Endothelial cell of umbilical vein (primary cell): ENCODE measurements at regions of chr3 and their contacts with region 1.

Region 1: GRCh38 chr3:30704931-30705890 is 98.8 kb downstream of the TGFBR2 start:
- DNase-seq: peak; percentile 82
- H3K4me3 ChIP-seq: no peak overlapping the region
- H3K27ac ChIP-seq: peak overlapping the region; percentile 26
- H3K4me1 ChIP-seq: peaks cover 23% of the 10 kb centered on the region
- H3K27me3 ChIP-seq: no peaks in the 10 kb centered on the region
- CTCF ChIP-seq: no peak
- POLR2A ChIP-seq: no peak

Region 2: DNA sequence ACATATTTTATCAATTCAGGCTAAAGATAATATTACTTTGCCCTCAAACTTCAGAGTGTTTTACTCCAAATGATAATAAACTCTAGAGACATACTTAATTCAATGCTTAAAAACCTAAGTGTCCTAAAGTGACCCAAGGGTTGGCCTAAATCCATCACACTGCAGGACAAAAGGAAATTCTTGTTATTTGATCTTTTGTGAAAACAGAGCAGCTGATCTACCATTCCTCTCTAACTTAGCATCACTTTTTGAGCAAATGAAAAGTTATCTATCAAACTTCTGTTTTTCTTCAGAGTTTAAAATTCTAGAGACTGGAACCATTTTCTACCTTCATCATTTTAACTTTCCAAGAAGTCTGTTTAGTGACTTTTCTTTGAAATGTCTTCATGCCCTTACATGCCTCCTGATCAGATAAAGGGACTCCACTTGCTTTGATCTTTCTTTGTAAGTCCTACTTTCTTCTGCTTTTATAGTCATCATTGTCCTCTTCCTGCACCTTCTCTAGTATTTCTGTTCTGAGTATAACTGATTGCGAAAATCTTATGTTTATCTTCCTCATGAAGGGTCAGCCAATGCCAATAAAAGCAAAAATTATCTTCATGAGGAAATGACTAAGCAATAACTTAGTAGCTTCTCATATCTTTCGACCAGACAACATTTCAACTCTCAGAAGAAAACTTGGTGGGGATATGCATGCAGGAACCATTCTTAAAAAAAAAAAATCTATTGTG is 477.5 kb before region 1 on chr3:
- CTCF ChIA-PET with region 1: no interaction called
- POLR2A ChIA-PET with region 1: no interaction called
- dilution Hi-C with region 1: no loop called
- intact Hi-C with region 1: loop called (anchors 5 kb)
- DNase-seq: peak; percentile 90
- H3K4me3 ChIP-seq: no peak overlapping the region
- H3K27ac ChIP-seq: peak overlapping the region; percentile 67
- H3K4me1 ChIP-seq: peaks cover 26% of the 10 kb centered on the region
- H3K27me3 ChIP-seq: no peaks in the 10 kb centered on the region
- CTCF ChIP-seq: no peak
- POLR2A ChIP-seq: no peak

Region 3: DNA sequence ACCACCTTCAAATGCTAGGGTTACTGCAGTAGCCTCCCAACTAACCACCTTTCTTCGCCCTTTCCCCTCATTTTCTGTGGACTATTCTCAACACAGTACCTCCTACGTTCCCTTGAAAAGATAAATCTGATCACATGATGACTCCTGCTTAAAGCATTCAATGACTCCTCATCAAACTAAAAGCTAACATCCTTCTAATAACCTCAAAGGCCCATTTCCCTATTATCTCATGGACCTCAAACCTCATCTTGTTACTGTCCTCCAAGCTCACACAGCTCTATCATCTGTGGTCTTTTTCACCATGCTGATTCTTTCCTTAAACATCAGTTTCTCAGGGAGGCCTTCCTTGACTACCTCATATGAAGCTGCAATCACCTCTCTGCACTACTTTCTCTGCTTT is 159.6 kb after region 1 on chr3:
- CTCF ChIA-PET with region 1: no interaction called
- POLR2A ChIA-PET with region 1: no interaction called
- dilution Hi-C with region 1: no loop called
- intact Hi-C with region 1: no loop called
- DNase-seq: no peak
- H3K4me3 ChIP-seq: no peak overlapping the region
- H3K27ac ChIP-seq: no peak overlapping the region
- H3K4me1 ChIP-seq: no peaks in the 10 kb centered on the region
- H3K27me3 ChIP-seq: peaks cover 16 to 17% of the 10 kb centered on the region in 2 experiments
- CTCF ChIP-seq: no peak
- POLR2A ChIP-seq: no peak